ENCODE measurements at regions of chr17 and their contacts with region 1.

Region 1: GRCh38 chr17:57946798-57947358 is 8.3 kb downstream of the CUEDC1 start:
- DNase-seq: peak; percentile 66 to 83
- ATAC-seq: peak; percentile 20 to 22; a peak in 4 of 6 replicates
- H3K4me3 ChIP-seq: peak overlapping the region; percentile 34
- H3K27ac ChIP-seq: peak overlapping the region; percentile 93 to 100
- H3K4me1 ChIP-seq: peaks cover 91% of the 10 kb centered on the region
- CTCF ChIP-seq: no peak
- EP300 ChIP-seq: no peak
- POLR2A ChIP-seq: no peak
- RAD21 ChIP-seq: no peak; a peak in 1 of 5 replicates

Region 2: GRCh38 chr17:57868007-57868909 is 78.6 kb before region 1 on chr17:
- CTCF ChIA-PET with region 1: interaction called, 227 read pairs
- POLR2A ChIA-PET with region 1: interaction called, 4 read pairs
- DNase-seq: peak; percentile 92 to 97
- ATAC-seq: peak; percentile 84 to 91
- H3K4me3 ChIP-seq: no peak overlapping the region
- H3K27ac ChIP-seq: peak overlapping the region; percentile 92 to 95
- H3K4me1 ChIP-seq: peaks cover 69% of the 10 kb centered on the region
- CTCF ChIP-seq: peak; percentile 50
- EP300 ChIP-seq: peak; percentile 44 to 91; a peak in 4 of 5 replicates
- POLR2A ChIP-seq: no peak
- RAD21 ChIP-seq: peak in 1 of 2 experiments; percentile 75

Region 3: GRCh38 chr17:57875309-57876115 is 71.4 kb before region 1 on chr17:
- CTCF ChIA-PET with region 1: interaction called, 155 read pairs
- POLR2A ChIA-PET with region 1: interaction called, 19 read pairs
- DNase-seq: peak; percentile 96 to 98
- ATAC-seq: peak; percentile 83 to 88
- H3K4me3 ChIP-seq: peak overlapping the region; percentile 7; the same call in 1 of the 3 replicates
- H3K27ac ChIP-seq: peak overlapping the region; percentile 92 to 95
- H3K4me1 ChIP-seq: peaks cover 95% of the 10 kb centered on the region
- CTCF ChIP-seq: peak; percentile 54; the same call in 2 of the 3 replicates
- EP300 ChIP-seq: peak; percentile 73 to 92; a peak in 3 of 5 replicates
- POLR2A ChIP-seq: no peak
- RAD21 ChIP-seq: peak; percentile 72 to 86

Region 4: DNA sequence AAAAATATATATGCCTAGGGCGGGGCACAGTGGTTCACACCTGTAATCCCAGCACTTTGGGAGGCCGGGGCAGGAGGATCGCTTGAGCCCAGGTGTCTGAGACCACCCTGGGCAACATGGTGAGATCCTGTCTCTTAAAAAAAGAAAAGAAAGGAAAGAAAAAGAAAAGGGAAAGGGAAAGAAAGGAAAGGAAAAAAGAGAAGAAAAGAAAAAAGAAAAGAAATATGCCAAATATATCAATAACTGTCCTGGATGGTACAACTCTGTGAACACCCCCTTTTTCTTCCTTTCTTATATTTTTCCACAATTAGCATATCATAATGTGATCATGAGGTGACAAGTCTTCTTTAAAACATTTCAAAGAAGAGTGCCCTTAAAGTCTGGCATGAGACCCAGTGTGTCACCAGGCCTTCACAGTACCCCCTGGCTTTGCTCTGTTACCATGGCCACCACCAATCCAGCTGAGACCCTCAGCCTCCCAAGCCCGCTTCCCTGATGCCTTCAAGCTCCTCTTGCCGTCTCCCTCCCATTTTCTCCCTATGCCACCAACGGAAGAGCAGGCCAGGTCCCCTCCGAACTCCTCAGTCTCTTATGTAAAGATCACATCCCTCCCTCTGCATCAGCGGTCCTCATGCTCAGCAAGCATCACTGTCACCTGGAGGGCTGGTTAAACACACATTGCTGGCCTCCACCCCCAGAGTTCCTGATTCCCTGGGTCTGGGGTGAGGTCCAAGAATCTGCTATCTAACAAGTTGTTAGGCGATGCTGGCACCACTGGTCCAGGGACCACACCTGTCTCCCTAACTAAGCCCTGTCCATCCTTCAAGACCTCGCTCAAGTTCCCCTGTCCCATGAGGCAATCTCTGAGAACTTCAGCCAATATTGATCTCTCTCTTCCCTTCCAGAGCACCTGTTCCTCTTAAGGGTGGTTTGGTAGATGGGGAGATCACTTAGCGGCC is 36.1 kb before region 1 on chr17:
- CTCF ChIA-PET with region 1: interaction called, 19 read pairs
- POLR2A ChIA-PET with region 1: no interaction called
- DNase-seq: no peak
- ATAC-seq: no peak
- H3K4me3 ChIP-seq: no peak overlapping the region
- H3K27ac ChIP-seq: peak overlapping the region in 1 of 2 experiments; percentile 74; a peak in 2 of 6 replicates
- H3K4me1 ChIP-seq: peaks cover 61% of the 10 kb centered on the region
- CTCF ChIP-seq: no peak
- EP300 ChIP-seq: no peak
- POLR2A ChIP-seq: no peak
- RAD21 ChIP-seq: no peak

Region 5: GRCh38 chr17:57916925-57917858 is 29.7 kb before region 1 on chr17:
- CTCF ChIA-PET with region 1: interaction called, 13 read pairs
- POLR2A ChIA-PET with region 1: interaction called, 3 read pairs
- DNase-seq: peak in 1 of 2 experiments; percentile 63
- ATAC-seq: peak; percentile 25 to 53; a peak in 4 of 6 replicates
- H3K4me3 ChIP-seq: no peak overlapping the region
- H3K27ac ChIP-seq: peak overlapping the region; percentile 56 to 74
- H3K4me1 ChIP-seq: peaks cover 76% of the 10 kb centered on the region
- CTCF ChIP-seq: peak; percentile 28
- EP300 ChIP-seq: no peak
- POLR2A ChIP-seq: no peak
- RAD21 ChIP-seq: peak; percentile 35 to 55; a peak in 3 of 5 replicates

Region 6: DNA sequence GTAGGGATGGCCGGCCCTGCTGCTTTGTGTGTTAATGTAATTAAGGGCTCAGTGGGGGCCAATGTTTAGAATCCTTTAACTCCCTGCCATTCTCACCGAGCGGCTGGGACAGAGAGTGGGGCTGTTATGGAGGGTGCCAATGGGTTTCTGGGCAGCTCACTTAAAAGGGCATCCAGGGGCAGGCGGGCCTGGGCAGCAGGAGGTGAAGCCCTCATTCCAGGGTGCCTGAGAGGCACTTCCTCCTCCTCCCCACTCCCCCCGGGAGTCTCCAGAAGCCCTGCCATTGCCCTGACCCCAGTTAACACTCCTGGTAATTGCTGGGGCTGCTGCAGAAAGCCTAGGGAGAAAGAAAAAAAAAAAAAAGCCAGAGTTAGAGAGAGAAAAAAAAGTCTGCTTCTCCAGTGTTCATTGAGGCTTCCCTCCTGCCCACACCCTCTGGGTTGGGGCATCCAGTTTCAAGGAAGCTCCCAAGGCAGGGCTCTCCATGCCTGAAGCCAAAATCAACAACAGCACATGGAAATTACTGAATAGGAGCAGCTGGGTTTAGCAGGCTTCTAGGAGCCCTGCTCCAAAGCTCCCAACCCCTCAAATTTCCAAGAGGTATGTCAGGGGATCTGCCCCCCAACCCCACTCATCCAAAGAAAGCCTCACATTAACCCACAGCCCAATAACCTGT is 19.7 kb before region 1 on chr17:
- CTCF ChIA-PET with region 1: interaction called, 222 read pairs
- POLR2A ChIA-PET with region 1: interaction called, 4 read pairs
- DNase-seq: no peak
- ATAC-seq: peak; percentile 20 to 63; a peak in 3 of 6 replicates
- H3K4me3 ChIP-seq: no peak overlapping the region
- H3K27ac ChIP-seq: peak overlapping the region; percentile 55 to 75; a peak in 5 of 6 replicates
- H3K4me1 ChIP-seq: peaks cover 79% of the 10 kb centered on the region
- CTCF ChIP-seq: no peak
- EP300 ChIP-seq: no peak
- POLR2A ChIP-seq: no peak
- RAD21 ChIP-seq: no peak

Region 7: GRCh38 chr17:58006924-58007780 is 60.3 kb after region 1 on chr17 and contains the start of gene SRSF1:
- CTCF ChIA-PET with region 1: interaction called, 266 read pairs
- POLR2A ChIA-PET with region 1: interaction called, 13 read pairs
- DNase-seq: peak; percentile 98 to 99
- ATAC-seq: peak; percentile 89 to 92
- H3K4me3 ChIP-seq: peak within 1 kb of the TSS; percentile 71
- H3K27ac ChIP-seq: peak within 1 kb of the TSS; percentile 95 to 97
- H3K4me1 ChIP-seq: peaks cover 39% of the 10 kb centered on the region
- CTCF ChIP-seq: no peak
- EP300 ChIP-seq: no peak
- POLR2A ChIP-seq: peak; percentile 98
- RAD21 ChIP-seq: no peak
- polyA plus RNA-seq, gene SRSF1: 332 and 490 TPM in 2 replicates

Region 8: DNA sequence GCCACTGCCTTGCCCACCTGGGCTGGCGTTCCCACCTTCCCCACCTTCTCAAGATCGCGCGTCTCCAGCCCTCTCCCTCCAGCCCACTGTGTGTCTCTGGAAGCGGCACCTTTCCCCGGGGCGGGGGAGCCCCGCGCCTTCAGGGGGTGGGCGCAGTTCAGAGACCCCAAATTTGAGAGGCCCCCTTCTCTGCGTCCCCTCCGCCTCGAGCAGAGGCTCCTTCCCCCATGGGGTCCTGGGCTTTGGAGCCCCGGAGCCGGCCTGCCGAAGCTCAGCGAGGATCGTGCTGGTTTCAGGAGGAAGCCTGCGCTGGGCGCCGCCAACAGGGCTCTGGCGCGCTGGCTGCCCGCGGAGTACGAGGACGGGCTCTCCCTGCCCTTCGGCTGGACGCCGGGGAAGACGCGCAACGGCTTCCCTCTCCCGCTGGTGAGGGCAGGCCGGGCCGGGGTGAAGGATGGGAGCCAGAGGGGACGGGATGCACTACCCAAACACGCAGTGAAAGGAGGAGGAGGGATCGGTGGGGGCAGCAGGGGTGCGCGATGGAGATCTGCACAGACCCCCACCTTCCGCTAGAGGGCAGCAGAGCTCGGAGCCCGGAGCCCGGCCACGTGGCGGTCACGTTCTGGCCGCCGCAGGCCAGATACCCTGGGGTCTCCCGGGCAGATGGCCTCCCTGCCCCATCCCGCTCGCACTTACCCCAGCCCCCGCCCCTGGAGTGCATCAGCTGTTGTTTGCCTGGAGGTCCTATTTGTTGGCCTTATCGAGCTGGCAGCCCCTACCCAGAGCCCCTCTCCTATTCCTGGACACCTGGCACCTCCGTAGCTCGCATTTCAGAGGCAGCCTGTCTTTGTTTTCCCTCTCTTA is 302.6 kb after region 1 on chr17:
- CTCF ChIA-PET with region 1: no interaction called
- POLR2A ChIA-PET with region 1: no interaction called
- DNase-seq: peak; percentile 60 to 95
- ATAC-seq: peak; percentile 70 to 91
- H3K4me3 ChIP-seq: peak overlapping the region; percentile 43
- H3K27ac ChIP-seq: peak overlapping the region; percentile 52 to 72; a peak in 5 of 6 replicates
- H3K4me1 ChIP-seq: peaks cover 8% of the 10 kb centered on the region
- CTCF ChIP-seq: peak; percentile 94
- EP300 ChIP-seq: no peak
- POLR2A ChIP-seq: no peak
- RAD21 ChIP-seq: peak; percentile 58 to 79

Measured in A549 (cell line).